Right ventricle myocardium superior (tissue), 1 donor: ENCODE measurements at regions of chr6 and their contacts with region 1.

Region 1: DNA sequence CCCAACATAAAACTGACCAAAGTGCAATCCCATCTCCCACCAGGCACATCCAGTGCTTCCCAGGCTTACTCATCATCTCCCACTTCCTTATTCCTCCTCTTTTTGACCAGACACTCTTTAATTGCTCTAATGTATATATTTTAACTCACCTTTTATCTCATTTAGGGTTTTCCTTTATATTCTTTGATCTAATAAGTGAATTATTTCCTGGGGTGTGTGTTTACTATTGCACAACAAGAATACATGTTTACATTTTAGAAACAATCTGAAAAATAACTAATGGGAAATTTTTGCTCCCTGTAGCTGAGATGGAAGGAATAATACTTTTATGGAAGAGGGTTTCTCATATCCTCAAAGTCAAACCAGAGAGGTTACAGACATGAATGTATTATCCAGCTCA is 18.4 kb downstream of the RHAG start:
- DNase-seq: no peak
- ATAC-seq: no peak

Region 2: GRCh38 chr6:49519660-49520059 is 98.6 kb before region 1 on chr6:
- intact Hi-C with region 1: loop called (anchors 10 kb)
- DNase-seq: no peak
- ATAC-seq: no peak

Region 3: DNA sequence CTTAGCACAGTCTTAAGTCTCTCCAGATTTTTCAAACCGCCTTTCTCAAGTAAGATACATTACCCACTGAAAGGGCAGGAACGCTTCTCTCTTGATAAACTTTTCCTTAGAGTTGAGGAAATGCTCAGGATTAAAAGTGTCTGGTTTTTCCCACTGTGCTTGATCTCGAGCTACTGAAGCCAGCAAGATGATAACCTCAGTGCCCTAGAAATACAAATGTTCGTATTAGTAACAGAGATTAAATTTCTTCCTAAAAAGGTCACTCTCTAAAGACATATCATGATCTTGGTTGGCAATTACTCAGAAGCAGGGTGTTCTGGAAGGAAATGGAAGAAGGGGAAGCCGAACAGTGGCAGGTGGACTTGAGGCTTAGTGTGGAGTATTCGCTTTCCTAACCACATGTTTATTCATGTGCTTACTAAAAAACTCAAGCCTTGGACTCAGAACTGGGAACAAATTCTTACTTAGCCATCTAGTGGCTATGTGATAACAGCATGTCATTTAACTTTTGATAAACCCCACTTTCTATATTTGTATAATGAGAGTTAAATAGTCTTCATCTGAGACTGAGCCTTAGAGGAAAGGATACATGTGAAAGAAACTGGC is 47.7 kb before region 1 on chr6:
- intact Hi-C with region 1: no loop called
- DNase-seq: no peak
- ATAC-seq: no peak

Region 4: DNA sequence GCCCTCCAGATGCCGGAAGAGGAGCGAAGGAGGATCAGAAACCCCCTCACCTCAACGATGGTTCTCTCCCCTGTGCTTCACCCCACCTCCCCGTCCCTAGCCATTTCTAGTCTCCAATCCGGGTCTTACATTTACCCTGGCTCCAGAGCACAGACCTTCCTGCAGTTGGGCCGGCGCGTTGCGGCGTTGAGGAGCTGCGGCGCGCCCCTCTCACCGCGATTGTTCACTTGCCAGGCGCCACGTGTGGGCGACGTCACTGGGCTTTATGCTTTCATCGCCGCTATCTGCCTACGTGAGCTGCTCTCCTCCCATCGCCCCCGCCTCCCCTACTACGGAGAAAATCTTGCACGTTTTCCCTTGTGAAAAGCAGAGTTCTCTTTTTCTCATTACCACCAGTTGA is 95.1 kb after region 1 on chr6 and contains the start of gene CRISP2:
- intact Hi-C with region 1: no loop called
- DNase-seq: no peak
- ATAC-seq: no peak
- total RNA-seq, gene CRISP2: not detected